ENCODE measurements at regions of chr3 and their contacts with region 1.

Region 1: GRCh38 chr3:197487908-197488391 is 67.8 kb downstream of the BDH1 start:
- DNase-seq: no peak
- H3K4me3 ChIP-seq: no peak overlapping the region
- H3K27ac ChIP-seq: peak overlapping the region; percentile 71
- H3K4me1 ChIP-seq: peaks cover 47% of the 10 kb centered on the region
- H3K27me3 ChIP-seq: no peaks in the 10 kb centered on the region
- CTCF ChIP-seq: no peak

Region 2: GRCh38 chr3:197305854-197306253 is 182.1 kb before region 1 on chr3:
- dilution Hi-C with region 1: loop called (anchors 25 kb)
- DNase-seq: no peak
- H3K4me3 ChIP-seq: peak overlapping the region in 2 of 3 experiments; percentile 9 to 43
- H3K27ac ChIP-seq: peak overlapping the region; percentile 65
- H3K4me1 ChIP-seq: peaks cover 54% of the 10 kb centered on the region
- H3K27me3 ChIP-seq: no peaks in the 10 kb centered on the region
- CTCF ChIP-seq: no peak